Activated naive CD4-positive, alpha-beta T cell treated with anti-CD3 and anti-CD28 coated beads, Interleukin-2, amount 10 ng/mL, durations not matched to agents 7 days and 5 days (primary cell): ENCODE measurements at regions of chr15 and their contacts with region 1.

Region 1: DNA sequence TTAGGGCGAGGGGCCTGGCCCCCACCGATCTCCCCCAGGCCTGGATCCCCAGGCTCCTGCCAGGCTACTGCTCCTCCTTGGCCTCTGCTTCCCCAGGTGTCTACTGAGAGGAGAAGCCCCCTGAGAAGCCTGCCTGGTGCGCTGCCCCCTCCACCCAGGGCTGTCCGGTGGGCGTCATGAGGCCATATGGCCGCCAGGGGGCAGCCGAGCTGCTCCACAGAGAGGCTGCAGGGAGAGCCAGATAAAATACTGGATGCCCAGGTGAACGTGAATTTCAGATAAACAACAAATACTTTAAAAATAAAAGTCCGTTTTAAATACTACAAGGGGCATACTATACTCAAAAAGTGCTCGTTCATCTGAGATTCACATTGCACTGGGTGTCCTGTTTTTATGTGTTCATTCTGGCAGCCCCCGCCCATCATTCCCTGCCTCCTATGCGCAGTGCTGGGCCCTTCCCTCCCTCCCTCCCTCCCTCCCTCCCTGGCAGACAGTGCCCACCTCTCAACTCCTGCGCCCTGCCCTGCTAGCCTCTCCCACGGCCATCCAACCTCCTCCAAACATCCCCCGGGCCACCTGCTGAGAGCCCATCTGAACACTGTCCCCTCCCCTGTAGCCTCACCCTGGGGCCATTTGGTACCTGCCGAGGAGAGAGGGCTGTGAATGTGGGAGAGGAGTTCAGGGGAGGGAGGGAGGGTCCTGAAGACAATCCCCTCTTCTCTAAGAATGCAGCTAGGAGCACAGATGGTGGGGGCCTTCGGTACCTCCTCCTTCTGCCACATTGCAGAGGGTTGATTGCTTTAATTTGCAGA is 29.6 kb downstream of the PSTPIP1 start:
- DNase-seq: peak; percentile 73
- H3K4me3 Mint-ChIP-seq: no peak overlapping the region
- H3K27ac Mint-ChIP-seq: peak overlapping the region; percentile 73
- H3K4me1 Mint-ChIP-seq: peaks cover 53% of the 10 kb centered on the region
- H3K27me3 Mint-ChIP-seq: no peaks in the 10 kb centered on the region

Region 2: GRCh38 chr15:76987926-76988860 is 36.3 kb before region 1 on chr15:
- CTCF ChIA-PET with region 1: interaction called, 46 read pairs
- DNase-seq: peak; percentile 67
- H3K4me3 Mint-ChIP-seq: peak overlapping the region; percentile 24
- H3K27ac Mint-ChIP-seq: peak overlapping the region; percentile 95
- H3K4me1 Mint-ChIP-seq: peaks cover 63% of the 10 kb centered on the region
- H3K27me3 Mint-ChIP-seq: no peaks in the 10 kb centered on the region

Region 3: GRCh38 chr15:76994971-76995945 is 29.2 kb before region 1 on chr15 and contains the start of gene PSTPIP1:
- CTCF ChIA-PET with region 1: interaction called, 46 read pairs
- DNase-seq: peak; percentile 84
- H3K4me3 Mint-ChIP-seq: peak within 1 kb of the TSS; percentile 94
- H3K27ac Mint-ChIP-seq: peak within 1 kb of the TSS; percentile 95
- H3K4me1 Mint-ChIP-seq: peaks cover 73% of the 10 kb centered on the region
- H3K27me3 Mint-ChIP-seq: no peaks in the 10 kb centered on the region

Region 4: DNA sequence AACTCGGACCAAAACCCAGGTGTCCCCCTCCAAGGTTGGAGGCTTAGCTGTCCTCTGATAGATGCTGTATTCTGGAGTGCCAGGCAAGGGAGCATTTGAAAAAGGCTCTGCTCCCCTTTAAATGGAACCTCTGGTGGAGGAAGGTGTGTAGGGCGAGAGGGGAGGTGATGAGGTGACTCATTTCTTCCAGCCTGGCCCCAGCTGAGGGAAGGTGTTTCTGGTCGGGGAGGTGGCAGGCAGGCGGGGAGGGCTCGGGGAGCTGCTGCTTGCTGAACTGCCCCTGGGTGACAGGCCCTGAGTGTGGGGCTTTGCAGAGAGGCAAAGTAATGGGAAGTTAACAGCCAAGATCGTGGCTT is 10.7 kb before region 1 on chr15:
- CTCF ChIA-PET with region 1: interaction called, 17 read pairs
- DNase-seq: peak; percentile 90
- H3K4me3 Mint-ChIP-seq: peak overlapping the region; percentile 76
- H3K27ac Mint-ChIP-seq: peak overlapping the region; percentile 97
- H3K4me1 Mint-ChIP-seq: peaks cover 96% of the 10 kb centered on the region
- H3K27me3 Mint-ChIP-seq: no peaks in the 10 kb centered on the region